ENCODE measurements at regions of chr3 and their contacts with region 1.

Region 1: GRCh38 chr3:176953106-176954060 is 243.9 kb downstream of the TBL1XR1 start:
- DNase-seq: peak; percentile 84

Region 2: GRCh38 chr3:177041021-177041729 is 87.8 kb after region 1 on chr3:
- intact Hi-C with region 1: loop called (anchors 5 kb)
- DNase-seq: no peak

Region 3: GRCh38 chr3:177126015-177126773 is 172.8 kb after region 1 on chr3:
- intact Hi-C with region 1: loop called (anchors 5 kb)
- DNase-seq: no peak

Region 4: GRCh38 chr3:177294221-177294620 is 340.8 kb after region 1 on chr3:
- intact Hi-C with region 1: loop called (anchors 5 kb)
- DNase-seq: no peak